Mammary epithelial cell (primary cell): ENCODE measurements at regions of chr7 and their contacts with region 1.

Region 1: DNA sequence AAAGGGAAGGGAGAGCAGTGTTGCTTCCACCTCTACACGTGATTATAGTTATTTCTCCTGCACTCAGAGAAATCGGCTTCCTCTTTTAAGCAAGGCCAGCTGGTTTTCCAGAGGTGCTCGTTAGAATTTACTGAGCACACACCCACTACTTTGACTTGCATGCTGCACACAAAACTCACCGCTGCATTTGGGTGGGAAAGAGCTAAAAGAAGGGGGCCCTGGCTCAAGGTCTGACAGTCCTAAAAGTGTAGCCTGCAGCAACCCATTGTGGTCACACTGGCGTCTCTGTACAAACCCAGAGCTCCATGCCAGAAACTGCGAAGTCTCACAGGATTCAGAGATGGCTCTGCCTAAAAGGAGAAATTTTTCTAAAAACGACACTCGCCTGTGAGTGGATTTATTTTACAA is 133.7 kb downstream of the SLC25A13 start:
- DNase-seq: no peak
- H3K4me3 ChIP-seq: no peak overlapping the region
- H3K27ac ChIP-seq: no peak overlapping the region
- H3K4me1 ChIP-seq: no peaks in the 10 kb centered on the region
- H3K27me3 ChIP-seq: no peaks in the 10 kb centered on the region
- CTCF ChIP-seq: no peak

Region 2: GRCh38 chr7:95434557-95435421 is 753.4 kb before region 1 on chr7 and contains the start of gene PON2:
- CTCF ChIA-PET with region 1: no interaction called
- dilution Hi-C with region 1: no loop called
- in situ Hi-C with region 1: no loop called
- intact Hi-C with region 1: no loop called
- DNase-seq: peak; percentile 84
- H3K4me3 ChIP-seq: peak within 1 kb of the TSS; percentile 75 to 82 (median 77)
- H3K27ac ChIP-seq: peak within 1 kb of the TSS; percentile 85
- H3K4me1 ChIP-seq: peaks cover 16% of the 10 kb centered on the region
- H3K27me3 ChIP-seq: no peaks in the 10 kb centered on the region
- CTCF ChIP-seq: peak in 1 of 2 donors; percentile 1
- total RNA-seq, gene PON2: 61.2 to 89.2 TPM

Region 3: GRCh38 chr7:96161897-96162296 is 26.3 kb before region 1 on chr7:
- CTCF ChIA-PET with region 1: no interaction called
- dilution Hi-C with region 1: no loop called
- in situ Hi-C with region 1: no loop called
- intact Hi-C with region 1: loop called (anchors 2 kb)
- DNase-seq: peak; percentile 7
- H3K4me3 ChIP-seq: no peak overlapping the region
- H3K27ac ChIP-seq: no peak overlapping the region
- H3K4me1 ChIP-seq: no peaks in the 10 kb centered on the region
- H3K27me3 ChIP-seq: no peaks in the 10 kb centered on the region
- CTCF ChIP-seq: no peak

Region 4: GRCh38 chr7:96303686-96304443 is 115.7 kb after region 1 on chr7:
- CTCF ChIA-PET with region 1: no interaction called
- dilution Hi-C with region 1: no loop called
- in situ Hi-C with region 1: no loop called
- intact Hi-C with region 1: no loop called
- DNase-seq: peak; percentile 95
- H3K4me3 ChIP-seq: no peak overlapping the region
- H3K27ac ChIP-seq: peak overlapping the region; percentile 85
- H3K4me1 ChIP-seq: peaks cover 36% of the 10 kb centered on the region
- H3K27me3 ChIP-seq: no peaks in the 10 kb centered on the region
- CTCF ChIP-seq: no peak